ENCODE measurements at regions of chr2 and their contacts with region 1.

Region 1: DNA sequence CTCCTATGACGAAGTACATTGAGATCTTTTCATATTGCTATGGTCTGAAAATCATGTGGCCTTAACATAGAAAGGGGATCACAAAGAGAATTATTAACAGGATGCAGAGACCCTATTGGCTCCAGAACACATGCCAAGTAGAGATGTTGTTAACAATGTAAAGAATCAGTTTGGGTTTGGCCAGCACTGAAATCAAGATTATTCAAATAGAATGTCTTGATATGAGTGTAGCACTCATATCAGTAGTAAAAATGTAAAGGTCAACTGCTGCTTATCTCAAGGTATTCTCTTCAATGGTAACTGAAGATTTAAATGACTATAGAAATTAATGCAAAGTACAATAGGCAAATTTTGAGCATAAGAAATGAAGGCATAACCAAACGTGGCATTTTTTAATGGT is 262.8 kb downstream of the PTH2R start:
- DNase-seq: no peak
- H3K4me3 ChIP-seq: no peak overlapping the region
- H3K27ac ChIP-seq: no peak overlapping the region
- H3K4me1 ChIP-seq: no peaks in the 10 kb centered on the region
- H3K27me3 ChIP-seq: peaks cover 0 to 3% (median 0%) of the 10 kb centered on the region in 4 donors
- CTCF ChIP-seq: no peak
- EP300 ChIP-seq: no peak
- POLR2A ChIP-seq: no peak

Region 2: GRCh38 chr2:208134928-208135586 is 534.3 kb before region 1 on chr2:
- intact Hi-C with region 1: no loop called
- DNase-seq: no peak
- H3K4me3 ChIP-seq: no peak overlapping the region
- H3K27ac ChIP-seq: no peak overlapping the region
- H3K4me1 ChIP-seq: peaks cover 0 to 22% (median 19%) of the 10 kb centered on the region in 4 donors
- H3K27me3 ChIP-seq: no peaks in the 10 kb centered on the region
- CTCF ChIP-seq: no peak
- EP300 ChIP-seq: no peak
- POLR2A ChIP-seq: no peak

Region 3: GRCh38 chr2:210519594-210519993 is 1850.2 kb after region 1 on chr2:
- intact Hi-C with region 1: loop called (anchors 10 kb)
- DNase-seq: no peak
- H3K4me3 ChIP-seq: no peak overlapping the region
- H3K27ac ChIP-seq: no peak overlapping the region
- H3K4me1 ChIP-seq: no peaks in the 10 kb centered on the region
- H3K27me3 ChIP-seq: no peaks in the 10 kb centered on the region
- CTCF ChIP-seq: no peak
- EP300 ChIP-seq: no peak
- POLR2A ChIP-seq: no peak

Measured in esophagus muscularis mucosa (tissue), 4 donors.